Natural killer cell (primary cell): ENCODE measurements at regions of chr18 and their contacts with region 1.

Region 1: GRCh38 chr18:23032030-23032582 is 99.0 kb downstream of the RBBP8 start:
- DNase-seq: no peak
- ATAC-seq: no peak
- H3K4me3 ChIP-seq: no peak overlapping the region
- H3K4me3 Mint-ChIP-seq: no peak overlapping the region
- H3K27ac ChIP-seq: no peak overlapping the region
- H3K27ac Mint-ChIP-seq: no peak overlapping the region
- H3K4me1 ChIP-seq: no peaks in the 10 kb centered on the region
- H3K4me1 Mint-ChIP-seq: peaks cover 0 to 5% of the 10 kb centered on the region in 2 donors
- H3K27me3 ChIP-seq: no peaks in the 10 kb centered on the region
- H3K27me3 Mint-ChIP-seq: no peaks in the 10 kb centered on the region
- CTCF ChIP-seq: no peak

Region 2: GRCh38 chr18:23357996-23358594 is 326.0 kb after region 1 on chr18:
- intact Hi-C with region 1: loop called (anchors 2 kb)
- DNase-seq: no peak
- ATAC-seq: peak in 1 of 3 donors; percentile 3
- H3K4me3 ChIP-seq: no peak overlapping the region
- H3K4me3 Mint-ChIP-seq: peak overlapping the region; percentile 76
- H3K27ac ChIP-seq: peak overlapping the region; percentile 30
- H3K27ac Mint-ChIP-seq: peak overlapping the region; percentile 75 to 85
- H3K4me1 ChIP-seq: peaks cover 26% of the 10 kb centered on the region
- H3K4me1 Mint-ChIP-seq: peaks cover 34 to 46% of the 10 kb centered on the region in 2 donors
- H3K27me3 ChIP-seq: no peaks in the 10 kb centered on the region
- H3K27me3 Mint-ChIP-seq: no peaks in the 10 kb centered on the region
- CTCF ChIP-seq: no peak

Region 3: GRCh38 chr18:23412351-23412964 is 380.4 kb after region 1 on chr18:
- intact Hi-C with region 1: loop called (anchors 5 kb)
- DNase-seq: no peak
- ATAC-seq: no peak
- H3K4me3 ChIP-seq: no peak overlapping the region
- H3K4me3 Mint-ChIP-seq: no peak overlapping the region
- H3K27ac ChIP-seq: no peak overlapping the region
- H3K27ac Mint-ChIP-seq: no peak overlapping the region
- H3K4me1 ChIP-seq: no peaks in the 10 kb centered on the region
- H3K4me1 Mint-ChIP-seq: peaks cover 0 to 7% of the 10 kb centered on the region in 2 donors
- H3K27me3 ChIP-seq: no peaks in the 10 kb centered on the region
- H3K27me3 Mint-ChIP-seq: no peaks in the 10 kb centered on the region
- CTCF ChIP-seq: no peak